PC-9 (cell line): ENCODE measurements at regions of chr1 and their contacts with region 1.

Region 1: GRCh38 chr1:52033190-52034049 is at the start of gene KTI12:
- DNase-seq: peak; percentile 70 to 77
- H3K4me3 ChIP-seq: peak within 1 kb of the TSS; percentile 68
- H3K27ac ChIP-seq: peak within 1 kb of the TSS; percentile 64
- H3K4me1 ChIP-seq: peaks cover 11% of the 10 kb centered on the region
- H3K27me3 ChIP-seq: no peaks in the 10 kb centered on the region
- CTCF ChIP-seq: no peak
- total RNA-seq, gene KTI12: 9.5 and 11.7 TPM in 2 replicates

Region 2: GRCh38 chr1:51926171-51926812 is 107.1 kb before region 1 on chr1:
- CTCF ChIA-PET with region 1: no interaction called
- POLR2A ChIA-PET with region 1: no interaction called
- intact Hi-C with region 1: no loop called
- DNase-seq: peak in 1 of 2 experiments; percentile 5
- H3K4me3 ChIP-seq: no peak overlapping the region
- H3K27ac ChIP-seq: no peak overlapping the region
- H3K4me1 ChIP-seq: no peaks in the 10 kb centered on the region
- H3K27me3 ChIP-seq: no peaks in the 10 kb centered on the region
- CTCF ChIP-seq: peak; percentile 18; the same call in 1 of the 2 replicates

Region 3: DNA sequence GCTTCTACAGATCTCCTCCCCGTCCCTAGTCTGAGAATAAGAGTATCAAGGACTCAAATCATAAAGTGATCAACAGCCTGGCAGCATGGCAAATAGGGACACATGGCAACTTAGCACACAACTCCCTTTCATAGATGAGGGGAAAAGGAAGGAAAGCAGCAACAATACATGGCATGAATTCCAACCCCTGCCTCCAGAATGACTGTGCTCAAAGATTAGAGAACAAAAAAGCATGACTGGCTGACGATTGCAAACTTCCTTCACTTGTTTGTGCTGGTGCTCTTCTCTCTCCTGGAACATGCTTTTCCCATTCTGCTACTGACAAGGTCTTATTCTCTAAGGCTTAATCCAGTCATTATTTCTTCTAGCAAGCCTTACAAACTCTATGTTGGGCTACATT is 11.3 kb before region 1 on chr1:
- CTCF ChIA-PET with region 1: no interaction called
- POLR2A ChIA-PET with region 1: no interaction called
- intact Hi-C with region 1: no loop called
- DNase-seq: no peak
- H3K4me3 ChIP-seq: no peak overlapping the region
- H3K27ac ChIP-seq: no peak overlapping the region
- H3K4me1 ChIP-seq: no peaks in the 10 kb centered on the region
- H3K27me3 ChIP-seq: no peaks in the 10 kb centered on the region
- CTCF ChIP-seq: no peak

Region 4: GRCh38 chr1:52056163-52056936 is 22.9 kb after region 1 on chr1 and contains the start of gene BTF3L4:
- CTCF ChIA-PET with region 1: no interaction called
- POLR2A ChIA-PET with region 1: interaction called, 4 read pairs
- intact Hi-C with region 1: loop called (anchors 1 kb)
- DNase-seq: peak; percentile 89 to 94
- H3K4me3 ChIP-seq: peak within 1 kb of the TSS; percentile 95
- H3K27ac ChIP-seq: peak within 1 kb of the TSS; percentile 93
- H3K4me1 ChIP-seq: peaks cover 39% of the 10 kb centered on the region
- H3K27me3 ChIP-seq: no peaks in the 10 kb centered on the region
- CTCF ChIP-seq: no peak
- total RNA-seq, gene BTF3L4: 47.0 and 48.6 TPM in 2 replicates